ENCODE measurements at regions of chr9 and their contacts with region 1.

Region 1: DNA sequence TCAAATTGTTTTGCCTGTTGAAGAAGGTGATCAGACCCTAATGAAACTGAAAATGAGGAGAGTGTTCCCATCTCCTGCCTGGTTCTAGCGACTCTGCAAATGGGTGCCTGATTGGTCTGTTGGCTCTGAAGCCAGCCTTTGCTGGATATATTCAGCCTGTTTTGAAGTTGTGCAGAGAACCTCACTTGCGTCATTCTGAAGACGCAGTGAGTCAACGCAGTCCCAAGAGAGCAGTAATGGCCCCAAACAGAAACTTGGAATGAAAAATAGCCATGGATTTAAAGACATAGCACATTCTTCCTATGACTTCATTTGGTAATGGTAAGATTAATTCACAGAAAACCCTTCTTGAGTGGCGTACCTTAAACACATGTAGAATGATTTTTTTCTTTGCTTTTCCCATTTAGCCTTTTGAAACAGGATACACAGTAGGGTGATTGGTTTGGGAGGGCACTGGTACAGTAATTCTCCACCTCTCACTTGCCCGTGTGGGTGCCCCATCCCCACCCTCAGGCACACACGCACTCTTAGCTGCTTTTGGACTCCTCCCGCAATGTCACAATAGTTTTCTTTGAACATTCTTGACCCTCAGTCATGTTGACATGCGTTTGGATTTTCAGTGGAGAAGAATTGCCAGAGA is 54.1 kb upstream of the ABL1 start:
- DNase-seq: peak; percentile 69 to 79
- ATAC-seq: peak; percentile 72 to 81 (median 78)
- H3K4me3 ChIP-seq: peak overlapping the region; percentile 42
- H3K27ac ChIP-seq: peak overlapping the region; percentile 70
- H3K4me1 ChIP-seq: peaks cover 60% of the 10 kb centered on the region
- H3K27me3 ChIP-seq: no peaks in the 10 kb centered on the region
- CTCF ChIP-seq: no peak

Region 2: GRCh38 chr9:130823435-130823834 is 42.5 kb after region 1 on chr9:
- intact Hi-C with region 1: no loop called
- DNase-seq: no peak
- ATAC-seq: peak; percentile 81 to 95 (median 90)
- H3K4me3 ChIP-seq: peak overlapping the region; percentile 43
- H3K27ac ChIP-seq: peak overlapping the region; percentile 75
- H3K4me1 ChIP-seq: peaks cover 33% of the 10 kb centered on the region
- H3K27me3 ChIP-seq: no peaks in the 10 kb centered on the region
- CTCF ChIP-seq: no peak

Region 3: DNA sequence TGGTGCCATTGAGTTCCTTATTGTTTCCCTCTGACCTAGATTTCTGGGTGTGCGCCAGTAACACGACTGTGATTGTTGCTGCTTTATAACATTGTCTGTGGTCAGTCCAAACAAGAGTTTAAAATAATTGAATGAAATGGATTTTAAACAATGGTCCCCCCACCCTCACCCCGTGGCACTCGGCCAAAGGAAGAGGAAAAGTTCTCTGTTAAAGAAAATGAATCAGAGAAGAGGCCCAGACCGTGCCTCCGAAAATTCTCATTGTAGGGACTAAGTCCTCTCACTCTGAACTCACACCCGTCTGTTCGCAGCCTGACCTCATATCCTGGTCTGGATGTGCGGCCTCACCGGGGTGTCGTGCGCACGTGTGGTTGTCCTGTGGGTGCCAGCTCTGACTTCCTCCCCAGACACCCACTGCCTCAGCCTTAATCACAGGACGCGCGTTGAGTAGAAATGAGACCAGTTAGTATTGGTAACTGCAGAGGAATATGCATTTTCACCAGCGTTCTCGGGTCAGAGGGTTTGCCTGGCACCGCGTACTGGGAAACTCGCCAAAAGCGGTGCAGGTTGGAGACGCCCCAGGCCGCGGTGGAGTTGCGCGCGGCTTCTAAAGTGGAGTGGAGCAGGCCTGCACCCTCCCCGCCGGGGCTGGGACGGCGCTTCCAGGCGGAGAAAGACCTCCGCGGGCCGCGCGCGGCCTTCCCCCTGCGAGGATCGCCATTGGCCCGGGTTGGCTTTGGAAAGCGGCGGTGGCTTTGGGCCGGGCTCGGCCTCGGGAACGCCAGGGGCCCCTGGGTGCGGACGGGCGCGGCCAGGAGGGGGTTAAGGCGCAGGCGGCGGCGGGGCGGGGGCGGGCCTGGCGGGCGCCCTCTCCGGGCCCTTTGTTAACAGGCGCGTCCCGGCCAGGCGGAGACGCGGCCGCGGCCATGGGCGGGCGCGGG is 53.7 kb after region 1 on chr9 and contains the start of gene ABL1:
- intact Hi-C with region 1: loop called (anchors 5 kb)
- DNase-seq: peak; percentile 76 to 85
- ATAC-seq: peak; percentile 77 to 87 (median 84)
- H3K4me3 ChIP-seq: peak within 1 kb of the TSS; percentile 83
- H3K27ac ChIP-seq: peak within 1 kb of the TSS; percentile 89
- H3K4me1 ChIP-seq: peaks cover 62% of the 10 kb centered on the region
- H3K27me3 ChIP-seq: no peaks in the 10 kb centered on the region
- CTCF ChIP-seq: no peak
- total RNA-seq, gene ABL1: 30.6 to 41.0 (median 34.5) TPM

Region 4: DNA sequence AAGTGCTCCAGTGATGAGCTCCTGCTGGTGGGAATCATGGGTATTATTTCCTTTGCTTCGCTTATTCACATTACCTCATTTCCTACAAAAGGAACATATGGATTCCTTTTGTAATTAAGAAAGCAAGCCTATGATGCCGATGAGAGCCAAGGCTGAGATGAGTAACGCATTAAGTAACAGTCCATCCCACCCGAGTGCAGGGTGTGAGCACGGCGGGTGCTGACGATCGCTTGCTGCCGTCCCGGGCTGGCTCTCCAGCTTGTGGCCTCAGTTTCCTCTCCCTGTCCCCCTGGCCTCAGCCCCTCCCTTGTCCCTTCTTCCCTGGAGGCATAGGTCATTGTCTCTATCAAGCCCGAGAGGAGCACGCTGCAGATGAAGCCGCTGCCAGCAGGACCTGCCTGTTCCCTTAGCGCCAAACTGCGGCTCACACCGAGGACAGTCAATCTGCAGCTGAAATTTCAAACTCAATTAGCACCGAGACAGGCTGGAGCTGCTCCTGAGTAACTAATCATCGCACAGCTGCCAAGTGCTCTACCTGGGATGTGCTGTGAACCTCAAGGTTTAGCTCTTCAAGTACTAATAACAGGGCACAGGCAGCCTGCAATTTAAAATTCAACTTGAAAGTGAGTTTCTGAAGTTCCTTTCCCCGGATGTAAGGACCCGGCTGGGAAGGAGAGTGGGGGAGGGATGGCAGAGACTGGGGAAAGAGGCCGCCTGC is 1074.1 kb after region 1 on chr9:
- intact Hi-C with region 1: no loop called
- DNase-seq: no peak
- ATAC-seq: no peak
- H3K4me3 ChIP-seq: no peak overlapping the region
- H3K27ac ChIP-seq: no peak overlapping the region
- H3K4me1 ChIP-seq: no peaks in the 10 kb centered on the region
- H3K27me3 ChIP-seq: no peaks in the 10 kb centered on the region
- CTCF ChIP-seq: no peak

Measured in psoas muscle (tissue), 8 donors.